B cell (primary cell): ENCODE measurements at regions of chr20 and their contacts with region 1.

Region 1: DNA sequence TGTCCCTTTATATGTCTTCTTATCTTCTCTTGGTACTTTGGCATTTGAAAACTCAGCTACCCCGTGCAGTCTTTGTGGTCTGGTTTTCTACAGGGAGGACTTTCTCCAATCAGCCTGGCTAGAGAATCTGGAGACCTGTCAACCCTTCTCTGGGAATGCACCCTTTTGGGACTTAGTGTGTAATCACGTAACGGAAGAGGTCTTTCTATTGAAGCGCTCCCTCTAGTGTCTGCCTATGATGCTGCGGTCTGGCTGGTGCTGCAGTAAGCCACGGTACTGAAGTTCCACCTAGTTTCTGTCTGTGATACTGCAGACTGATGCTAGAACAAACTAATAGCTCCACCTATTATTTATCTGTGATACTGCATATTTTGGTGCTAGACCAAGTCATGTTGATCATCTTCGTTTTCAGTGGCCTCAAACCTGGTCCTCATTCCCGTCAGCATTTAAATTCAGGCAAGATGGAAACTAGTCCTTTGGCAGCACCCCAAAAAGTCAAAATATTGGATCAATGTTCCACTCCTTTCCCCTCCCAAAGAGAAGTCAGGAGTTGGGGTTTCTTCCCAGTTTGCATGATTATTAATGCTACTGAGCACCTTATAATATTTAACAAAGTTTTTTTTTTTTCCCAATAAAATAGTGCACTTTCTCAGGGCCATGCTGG is 12.5 kb upstream of the SIRPB2 start:
- DNase-seq: peak; percentile 91
- ATAC-seq: peak; percentile 100
- H3K4me3 ChIP-seq: no peak overlapping the region
- H3K4me3 Mint-ChIP-seq: no peak overlapping the region
- H3K27ac ChIP-seq: no peak overlapping the region
- H3K27ac Mint-ChIP-seq: no peak overlapping the region
- H3K4me1 ChIP-seq: peaks cover 0 to 3% of the 10 kb centered on the region in 2 donors
- H3K4me1 Mint-ChIP-seq: peaks cover 2% of the 10 kb centered on the region
- H3K27me3 ChIP-seq: peaks cover 0 to 29% (median 10%) of the 10 kb centered on the region in 4 experiments
- H3K27me3 Mint-ChIP-seq: peaks cover 58% of the 10 kb centered on the region
- CTCF ChIP-seq: peak; percentile 100

Region 2: DNA sequence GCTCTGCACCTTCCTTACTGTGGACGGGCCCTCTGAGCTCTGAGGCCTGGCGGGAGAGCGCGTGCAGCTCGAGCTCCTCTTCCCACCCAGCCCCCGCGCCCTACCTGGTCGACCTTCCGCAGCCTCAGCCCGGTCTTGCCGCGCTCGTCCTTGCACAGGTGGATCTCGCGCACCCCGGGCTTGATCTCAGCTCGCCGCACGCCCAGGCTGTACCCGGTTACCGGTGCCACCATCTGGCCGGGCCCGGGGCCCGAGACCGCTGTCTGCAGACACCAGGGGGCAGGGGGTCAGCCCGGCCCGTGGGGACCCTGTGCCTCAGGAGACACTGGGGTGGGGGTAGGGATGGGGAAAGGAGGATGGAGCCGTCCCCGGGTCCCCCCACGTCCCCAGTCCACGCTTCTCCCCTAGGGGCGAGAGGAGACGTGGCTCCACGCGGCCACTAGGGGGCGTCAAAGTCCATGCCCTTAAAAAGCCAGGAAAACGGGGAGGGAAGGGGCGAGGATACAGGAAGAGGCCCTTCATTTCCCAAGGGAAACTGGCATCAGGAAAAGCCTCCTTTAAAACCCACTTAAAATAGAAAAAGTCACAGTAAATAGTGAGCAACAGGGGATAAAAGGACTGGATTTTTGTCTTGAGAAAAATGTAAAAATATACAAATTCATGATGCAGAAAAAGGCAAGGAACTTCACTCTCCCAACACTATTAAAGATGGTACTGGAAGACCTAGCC is 190.3 kb before region 1 on chr20:
- CTCF ChIA-PET with region 1: interaction called, 44 read pairs
- POLR2A ChIA-PET with region 1: no interaction called
- intact Hi-C with region 1: loop called (anchors 1 kb)
- DNase-seq: peak; percentile 78
- ATAC-seq: peak; percentile 65
- H3K4me3 ChIP-seq: no peak overlapping the region
- H3K4me3 Mint-ChIP-seq: no peak overlapping the region
- H3K27ac ChIP-seq: no peak overlapping the region
- H3K27ac Mint-ChIP-seq: no peak overlapping the region
- H3K4me1 ChIP-seq: peaks cover 0 to 7% of the 10 kb centered on the region in 2 donors
- H3K4me1 Mint-ChIP-seq: no peaks in the 10 kb centered on the region
- H3K27me3 ChIP-seq: no peaks in the 10 kb centered on the region
- H3K27me3 Mint-ChIP-seq: peaks cover 4% of the 10 kb centered on the region
- CTCF ChIP-seq: peak; percentile 99

Region 3: GRCh38 chr20:1392823-1393506 is 110.7 kb before region 1 on chr20 and contains the start of gene FKBP1A:
- CTCF ChIA-PET with region 1: interaction called, 7 read pairs
- POLR2A ChIA-PET with region 1: no interaction called
- intact Hi-C with region 1: loop called (anchors 1 kb)
- DNase-seq: peak; percentile 97
- ATAC-seq: peak; percentile 88
- H3K4me3 ChIP-seq: peak within 1 kb of the TSS; percentile 66 to 93 (median 76)
- H3K4me3 Mint-ChIP-seq: peak within 1 kb of the TSS; percentile 100
- H3K27ac ChIP-seq: peak within 1 kb of the TSS; percentile 82 to 84
- H3K27ac Mint-ChIP-seq: peak within 1 kb of the TSS; percentile 100
- H3K4me1 ChIP-seq: peaks cover 64 to 66% of the 10 kb centered on the region in 2 donors
- H3K4me1 Mint-ChIP-seq: peaks cover 83% of the 10 kb centered on the region
- H3K27me3 ChIP-seq: no peaks in the 10 kb centered on the region
- H3K27me3 Mint-ChIP-seq: no peaks in the 10 kb centered on the region
- CTCF ChIP-seq: no peak
- total RNA-seq, gene FKBP1A: 86.5 and 86.7 TPM in 2 replicates

Region 4: GRCh38 chr20:1443085-1443484 is 60.6 kb before region 1 on chr20:
- CTCF ChIA-PET with region 1: interaction called, 71 read pairs
- POLR2A ChIA-PET with region 1: no interaction called
- intact Hi-C with region 1: no loop called
- DNase-seq: no peak
- ATAC-seq: no peak
- H3K4me3 ChIP-seq: no peak overlapping the region
- H3K4me3 Mint-ChIP-seq: no peak overlapping the region
- H3K27ac ChIP-seq: no peak overlapping the region
- H3K27ac Mint-ChIP-seq: no peak overlapping the region
- H3K4me1 ChIP-seq: no peaks in the 10 kb centered on the region
- H3K4me1 Mint-ChIP-seq: peaks cover 3% of the 10 kb centered on the region
- H3K27me3 ChIP-seq: no peaks in the 10 kb centered on the region
- H3K27me3 Mint-ChIP-seq: no peaks in the 10 kb centered on the region
- CTCF ChIP-seq: no peak

Region 5: GRCh38 chr20:1474825-1475603 is 28.7 kb before region 1 on chr20:
- CTCF ChIA-PET with region 1: interaction called, 15 read pairs
- POLR2A ChIA-PET with region 1: no interaction called
- intact Hi-C with region 1: no loop called
- DNase-seq: no peak
- ATAC-seq: no peak
- H3K4me3 ChIP-seq: no peak overlapping the region
- H3K4me3 Mint-ChIP-seq: no peak overlapping the region
- H3K27ac ChIP-seq: no peak overlapping the region
- H3K27ac Mint-ChIP-seq: no peak overlapping the region
- H3K4me1 ChIP-seq: peaks cover 17 to 24% of the 10 kb centered on the region in 2 donors
- H3K4me1 Mint-ChIP-seq: peaks cover 28% of the 10 kb centered on the region
- H3K27me3 ChIP-seq: peaks cover 0 to 3% (median 0%) of the 10 kb centered on the region in 4 experiments
- H3K27me3 Mint-ChIP-seq: peaks cover 6% of the 10 kb centered on the region
- CTCF ChIP-seq: no peak

Region 6: GRCh38 chr20:1489764-1490450 is 13.8 kb before region 1 on chr20:
- CTCF ChIA-PET with region 1: interaction called, 31 read pairs
- POLR2A ChIA-PET with region 1: no interaction called
- intact Hi-C with region 1: no loop called
- DNase-seq: no peak
- ATAC-seq: no peak
- H3K4me3 ChIP-seq: peak overlapping the region in 1 of 5 experiments; percentile 78
- H3K4me3 Mint-ChIP-seq: no peak overlapping the region
- H3K27ac ChIP-seq: no peak overlapping the region
- H3K27ac Mint-ChIP-seq: no peak overlapping the region
- H3K4me1 ChIP-seq: peaks cover 35 to 38% of the 10 kb centered on the region in 2 donors
- H3K4me1 Mint-ChIP-seq: peaks cover 39% of the 10 kb centered on the region
- H3K27me3 ChIP-seq: no peaks in the 10 kb centered on the region
- H3K27me3 Mint-ChIP-seq: peaks cover 18% of the 10 kb centered on the region
- CTCF ChIP-seq: no peak

Region 7: DNA sequence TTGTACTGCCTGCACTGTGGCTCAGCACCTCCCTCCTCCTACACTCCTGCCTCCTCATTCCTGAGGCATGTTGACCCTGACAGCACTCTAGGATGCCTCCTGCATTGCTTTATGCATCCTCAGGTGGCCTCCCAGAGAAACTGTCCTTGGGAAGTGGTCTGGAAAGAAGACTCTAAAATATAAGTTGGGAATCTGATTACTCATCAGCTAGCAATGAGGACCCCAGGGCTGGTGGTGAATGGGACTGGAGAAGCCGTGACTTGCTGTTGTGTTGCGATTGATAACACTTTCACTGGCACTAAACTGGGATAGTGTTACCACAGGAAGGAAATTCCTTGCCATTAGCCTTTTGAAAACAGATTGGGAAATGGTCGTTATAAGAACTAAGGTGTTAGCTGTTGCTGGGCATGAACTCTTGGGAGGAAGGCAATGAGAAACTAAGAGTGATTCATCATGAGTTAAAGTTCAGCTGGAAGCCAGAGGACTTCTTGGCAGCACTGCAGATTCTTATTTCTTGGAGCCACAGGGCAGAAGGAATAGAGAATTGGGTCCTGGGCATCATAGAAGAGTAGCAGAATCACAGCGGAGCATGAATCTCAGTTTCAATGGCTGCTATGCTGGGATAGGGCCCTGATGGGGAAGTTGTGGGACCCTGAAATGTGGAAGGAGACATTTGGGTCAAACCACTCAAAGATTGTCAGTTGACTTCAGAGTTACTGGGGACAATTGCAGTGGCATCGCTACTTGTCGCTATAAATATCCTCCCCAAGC is 63.9 kb after region 1 on chr20:
- CTCF ChIA-PET with region 1: no interaction called
- POLR2A ChIA-PET with region 1: no interaction called
- intact Hi-C with region 1: no loop called
- DNase-seq: no peak
- ATAC-seq: no peak
- H3K4me3 ChIP-seq: no peak overlapping the region
- H3K4me3 Mint-ChIP-seq: no peak overlapping the region
- H3K27ac ChIP-seq: no peak overlapping the region
- H3K27ac Mint-ChIP-seq: no peak overlapping the region
- H3K4me1 ChIP-seq: no peaks in the 10 kb centered on the region
- H3K4me1 Mint-ChIP-seq: peaks cover 4% of the 10 kb centered on the region
- H3K27me3 ChIP-seq: no peaks in the 10 kb centered on the region
- H3K27me3 Mint-ChIP-seq: peaks cover 26% of the 10 kb centered on the region
- CTCF ChIP-seq: no peak

Region 8: GRCh38 chr20:1776681-1777475 is 273.2 kb after region 1 on chr20:
- CTCF ChIA-PET with region 1: interaction called, 18 read pairs
- POLR2A ChIA-PET with region 1: no interaction called
- intact Hi-C with region 1: no loop called
- DNase-seq: peak; percentile 87
- ATAC-seq: peak; percentile 92
- H3K4me3 ChIP-seq: peak overlapping the region in 4 of 5 experiments; percentile 64 to 95 (median 74)
- H3K4me3 Mint-ChIP-seq: peak overlapping the region; percentile 93
- H3K27ac ChIP-seq: peak overlapping the region; percentile 32 to 66
- H3K27ac Mint-ChIP-seq: peak overlapping the region; percentile 65
- H3K4me1 ChIP-seq: peaks cover 11 to 13% of the 10 kb centered on the region in 2 donors
- H3K4me1 Mint-ChIP-seq: peaks cover 16% of the 10 kb centered on the region
- H3K27me3 ChIP-seq: peaks cover 0 to 10% (median 2%) of the 10 kb centered on the region in 4 experiments
- H3K27me3 Mint-ChIP-seq: peaks cover 16% of the 10 kb centered on the region
- CTCF ChIP-seq: peak; percentile 78